ENCODE measurements at regions of chr14 and their contacts with region 1.

Region 1: GRCh38 chr14:79786522-79786921 is 424.8 kb downstream of the DIO2 start:
- DNase-seq: no peak
- ATAC-seq: no peak
- H3K4me3 ChIP-seq: no peak overlapping the region
- H3K27ac ChIP-seq: no peak overlapping the region
- H3K4me1 ChIP-seq: no peaks in the 10 kb centered on the region
- H3K27me3 ChIP-seq: no peaks in the 10 kb centered on the region
- CTCF ChIP-seq: no peak
- POLR2A ChIP-seq: no peak

Region 2: DNA sequence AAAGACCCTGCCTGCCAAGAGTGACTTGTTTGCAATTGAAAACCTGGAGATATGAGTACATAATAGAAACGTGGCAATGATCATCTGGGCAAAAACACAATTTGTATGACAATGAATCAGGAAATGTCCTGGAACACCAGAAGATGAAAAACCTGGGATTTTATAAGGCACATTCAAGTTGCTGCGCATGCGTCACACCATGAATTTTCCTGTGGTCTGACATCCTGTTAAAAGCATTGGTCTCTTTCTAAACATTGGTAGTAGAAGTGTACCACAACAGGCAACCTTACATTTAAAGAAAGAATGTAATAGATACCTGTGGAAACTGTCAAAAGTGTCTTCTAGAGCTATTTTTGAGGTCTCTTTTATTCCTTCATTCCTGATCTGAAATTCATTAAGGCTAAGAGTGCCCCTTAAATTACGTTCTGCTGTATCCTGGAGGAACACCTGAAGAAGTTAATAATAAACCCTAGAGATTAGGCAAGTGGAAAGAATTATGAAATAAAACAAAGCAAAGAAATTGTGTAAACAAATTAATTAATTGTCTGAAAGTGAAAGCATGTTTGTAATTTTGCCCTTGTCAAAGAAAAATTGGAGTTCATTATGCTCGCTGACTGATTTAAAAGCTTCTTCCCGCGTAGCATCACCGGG is 251.7 kb before region 1 on chr14:
- intact Hi-C with region 1: loop called in 1 of 10 experiments (anchors 5 kb)
- DNase-seq: no peak
- ATAC-seq: no peak
- H3K4me3 ChIP-seq: no peak overlapping the region
- H3K27ac ChIP-seq: no peak overlapping the region
- H3K4me1 ChIP-seq: no peaks in the 10 kb centered on the region
- H3K27me3 ChIP-seq: no peaks in the 10 kb centered on the region
- CTCF ChIP-seq: no peak
- POLR2A ChIP-seq: no peak

Measured in heart left ventricle (tissue), 16 donors.